A673 (cell line): ENCODE measurements at regions of chr6 and their contacts with region 1.

Region 1: GRCh38 chr6:82270881-82271645 is 23.5 kb upstream of the IBTK start:
- DNase-seq: peak; percentile 75
- H3K4me3 ChIP-seq: no peak overlapping the region
- H3K27ac ChIP-seq: no peak overlapping the region
- H3K4me1 ChIP-seq: peaks cover 49% of the 10 kb centered on the region
- H3K27me3 ChIP-seq: no peaks in the 10 kb centered on the region
- CTCF ChIP-seq: peak; percentile 75

Region 2: DNA sequence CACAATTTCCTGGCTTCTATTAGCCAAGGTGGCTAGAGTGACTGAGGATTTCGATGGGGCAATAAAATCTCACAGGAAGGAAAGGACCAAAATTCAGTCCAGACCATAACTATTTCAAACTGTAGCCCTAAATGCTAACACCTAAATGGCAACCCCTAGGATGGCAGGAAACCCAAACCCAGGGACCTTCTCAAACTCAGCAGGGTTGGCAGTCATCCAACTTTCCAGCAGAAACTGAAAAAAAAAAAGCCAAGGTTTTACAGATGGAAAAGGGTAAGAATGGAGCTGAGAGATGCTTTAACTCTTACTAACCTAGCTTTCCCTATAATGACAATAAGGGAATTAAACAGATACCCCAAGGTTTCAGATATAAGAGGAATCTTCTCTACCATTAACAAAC is 34.0 kb before region 1 on chr6:
- CTCF ChIA-PET with region 1: no interaction called
- POLR2A ChIA-PET with region 1: no interaction called
- intact Hi-C with region 1: no loop called
- DNase-seq: peak; percentile 70
- H3K4me3 ChIP-seq: no peak overlapping the region
- H3K27ac ChIP-seq: no peak overlapping the region
- H3K4me1 ChIP-seq: peaks cover 12% of the 10 kb centered on the region
- H3K27me3 ChIP-seq: no peaks in the 10 kb centered on the region
- CTCF ChIP-seq: no peak

Region 3: GRCh38 chr6:82363351-82364086 is 92.5 kb after region 1 on chr6 and contains the start of gene TPBG:
- CTCF ChIA-PET with region 1: interaction called, 4 read pairs
- POLR2A ChIA-PET with region 1: no interaction called
- intact Hi-C with region 1: loop called (anchors 2 kb)
- DNase-seq: peak; percentile 86
- H3K4me3 ChIP-seq: peak within 1 kb of the TSS; percentile 83
- H3K27ac ChIP-seq: peak within 1 kb of the TSS; percentile 95
- H3K4me1 ChIP-seq: peaks cover 40% of the 10 kb centered on the region
- H3K27me3 ChIP-seq: no peaks in the 10 kb centered on the region
- CTCF ChIP-seq: peak; percentile 51
- total RNA-seq, gene TPBG: 66.4 and 67.1 TPM in 2 replicates

Region 4: DNA sequence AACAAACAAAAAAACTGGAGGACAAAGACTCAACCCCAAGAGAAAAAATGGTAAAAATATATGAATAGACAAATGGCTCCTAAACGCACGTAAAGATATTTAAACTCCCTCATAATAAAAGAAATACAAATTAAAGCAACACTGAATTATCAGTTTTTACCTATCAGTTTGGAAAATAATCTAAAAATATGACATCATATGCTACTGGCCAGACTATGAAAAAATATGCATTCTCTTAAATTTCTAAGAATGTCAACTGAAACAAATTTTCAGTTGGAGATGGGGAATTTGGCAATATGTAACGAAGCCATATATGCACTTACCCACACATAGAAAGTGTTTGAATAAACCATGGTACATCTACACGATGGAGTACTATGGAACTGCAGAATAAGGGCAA is 270.2 kb after region 1 on chr6:
- CTCF ChIA-PET with region 1: no interaction called
- POLR2A ChIA-PET with region 1: interaction called, 17 read pairs
- intact Hi-C with region 1: no loop called
- DNase-seq: no peak
- H3K4me3 ChIP-seq: no peak overlapping the region
- H3K27ac ChIP-seq: no peak overlapping the region
- H3K4me1 ChIP-seq: peaks cover 9% of the 10 kb centered on the region
- H3K27me3 ChIP-seq: no peaks in the 10 kb centered on the region
- CTCF ChIP-seq: no peak

Region 5: DNA sequence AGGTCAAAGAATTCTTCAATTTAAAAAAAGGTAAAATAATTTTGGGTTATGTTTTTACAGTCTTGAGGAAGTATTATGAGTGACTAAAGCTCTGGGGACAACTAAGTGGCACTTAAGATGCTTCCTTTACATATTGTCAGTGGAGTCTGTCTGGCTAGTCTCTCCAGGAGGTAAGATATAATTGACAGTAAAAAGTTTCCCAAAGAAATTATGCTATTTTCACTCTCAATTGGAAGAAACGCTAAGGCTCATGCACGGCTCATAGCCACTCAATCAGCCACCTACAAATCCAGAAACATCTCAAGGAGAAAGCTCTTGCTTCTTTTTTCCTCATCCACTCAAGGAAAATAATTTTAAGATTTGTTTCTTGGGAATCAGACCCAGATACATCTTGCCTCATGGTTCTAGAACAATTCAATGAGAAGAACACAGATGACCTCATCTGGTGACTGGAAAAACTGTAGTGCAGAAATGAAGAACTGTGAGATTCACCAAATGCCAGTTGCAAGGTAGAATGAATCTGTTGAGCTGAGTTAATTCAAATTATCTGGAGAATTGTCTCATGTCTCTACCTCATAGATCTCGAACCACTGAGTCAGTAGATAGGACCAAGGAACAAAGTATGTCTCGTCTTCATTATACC is 345.4 kb after region 1 on chr6:
- CTCF ChIA-PET with region 1: interaction called, 4 read pairs
- POLR2A ChIA-PET with region 1: no interaction called
- intact Hi-C with region 1: loop called (anchors 5 kb)
- DNase-seq: peak; percentile 93
- H3K4me3 ChIP-seq: peak overlapping the region; percentile 4
- H3K27ac ChIP-seq: peak overlapping the region; percentile 59
- H3K4me1 ChIP-seq: peaks cover 60% of the 10 kb centered on the region
- H3K27me3 ChIP-seq: no peaks in the 10 kb centered on the region
- CTCF ChIP-seq: peak; percentile 47; the same call in 1 of the 2 replicates

Region 6: GRCh38 chr6:83057705-83058321 is 786.8 kb after region 1 on chr6:
- CTCF ChIA-PET with region 1: interaction called, 3 read pairs
- POLR2A ChIA-PET with region 1: no interaction called
- intact Hi-C with region 1: loop called (anchors 1 kb)
- DNase-seq: peak; percentile 80
- H3K4me3 ChIP-seq: no peak overlapping the region
- H3K27ac ChIP-seq: peak overlapping the region; percentile 44
- H3K4me1 ChIP-seq: peaks cover 74% of the 10 kb centered on the region
- H3K27me3 ChIP-seq: no peaks in the 10 kb centered on the region
- CTCF ChIP-seq: peak; percentile 92